Psoas muscle (tissue), 8 donors: ENCODE measurements at regions of chr19 and their contacts with region 1.

Region 1: DNA sequence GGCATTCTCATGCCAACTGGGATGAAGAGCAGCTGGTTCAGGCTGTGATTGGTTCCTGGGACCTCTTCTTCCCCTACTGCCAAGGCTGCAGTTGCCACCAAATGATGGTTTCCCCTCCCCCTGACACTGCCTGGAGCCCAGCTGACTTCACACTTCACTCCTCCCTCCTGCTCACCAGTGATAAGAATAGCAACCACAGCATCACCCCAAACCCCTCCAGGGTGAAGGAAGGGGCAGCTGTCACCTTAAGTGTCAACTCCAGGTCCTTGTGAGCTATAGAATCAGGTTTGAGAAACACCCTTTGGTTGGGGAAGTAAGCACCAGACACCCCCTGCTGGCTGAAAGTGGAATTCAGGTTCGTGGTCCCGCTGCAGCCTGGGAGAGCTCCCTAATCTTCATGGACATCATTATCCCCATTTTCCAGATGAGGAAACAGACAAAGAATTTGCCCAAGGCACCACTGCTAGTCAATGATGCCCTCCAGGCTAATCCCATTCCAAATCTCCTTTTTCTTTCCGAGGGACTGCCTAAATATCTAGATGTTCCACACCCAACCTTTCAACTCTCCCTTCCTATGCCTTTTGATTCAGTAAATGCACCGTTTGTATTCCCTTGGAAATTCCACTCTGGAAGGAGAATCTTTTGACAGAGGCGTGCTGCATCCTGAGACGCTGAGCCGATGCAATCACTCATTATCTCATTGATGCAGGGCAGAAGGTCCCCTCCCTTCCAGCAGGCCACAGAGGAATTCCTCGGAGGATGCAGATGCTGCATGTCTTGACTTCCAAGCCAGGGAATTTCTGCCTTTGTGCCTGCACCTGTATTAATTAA is 50.6 kb upstream of the UQCRFS1 start:
- DNase-seq: peak; percentile 51 to 66
- ATAC-seq: peak; percentile 56 to 82 (median 78)
- H3K4me3 ChIP-seq: no peak overlapping the region
- H3K27ac ChIP-seq: peak overlapping the region; percentile 28
- H3K4me1 ChIP-seq: peaks cover 10% of the 10 kb centered on the region
- H3K27me3 ChIP-seq: no peaks in the 10 kb centered on the region
- CTCF ChIP-seq: peak; percentile 75

Region 2: GRCh38 chr19:28737021-28737895 is 526.3 kb before region 1 on chr19:
- intact Hi-C with region 1: loop called (anchors 2 to 10 kb)
- DNase-seq: no peak
- ATAC-seq: peak in 1 of 4 donors; percentile 23
- H3K4me3 ChIP-seq: no peak overlapping the region
- H3K27ac ChIP-seq: no peak overlapping the region
- H3K4me1 ChIP-seq: no peaks in the 10 kb centered on the region
- H3K27me3 ChIP-seq: no peaks in the 10 kb centered on the region
- CTCF ChIP-seq: peak; percentile 63

Region 3: DNA sequence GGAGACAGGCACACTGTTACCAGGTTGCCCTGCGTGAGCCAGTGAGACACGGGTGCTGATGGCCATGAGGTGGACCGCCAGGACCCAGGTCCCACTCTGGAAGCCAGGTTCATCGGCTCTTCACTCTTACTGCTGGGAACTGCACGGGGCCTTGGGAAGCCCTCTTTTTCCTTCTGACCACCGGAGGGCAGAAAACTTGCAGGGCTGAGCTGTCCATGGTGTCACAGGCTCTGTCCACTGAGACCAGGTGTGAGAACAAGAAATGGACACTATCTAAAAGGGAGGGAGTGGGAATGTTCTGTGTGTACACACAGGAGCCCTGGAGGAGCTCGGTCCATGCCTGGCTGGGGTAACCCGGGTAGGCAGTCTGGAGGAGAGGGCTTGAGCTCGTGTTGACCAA is 143.9 kb before region 1 on chr19:
- intact Hi-C with region 1: loop called in 1 of 2 experiments (anchors 1 kb)
- DNase-seq: no peak
- ATAC-seq: peak in 2 of 4 donors; percentile 54 to 73
- H3K4me3 ChIP-seq: no peak overlapping the region
- H3K27ac ChIP-seq: no peak overlapping the region
- H3K4me1 ChIP-seq: no peaks in the 10 kb centered on the region
- H3K27me3 ChIP-seq: no peaks in the 10 kb centered on the region
- CTCF ChIP-seq: peak; percentile 34

Region 4: DNA sequence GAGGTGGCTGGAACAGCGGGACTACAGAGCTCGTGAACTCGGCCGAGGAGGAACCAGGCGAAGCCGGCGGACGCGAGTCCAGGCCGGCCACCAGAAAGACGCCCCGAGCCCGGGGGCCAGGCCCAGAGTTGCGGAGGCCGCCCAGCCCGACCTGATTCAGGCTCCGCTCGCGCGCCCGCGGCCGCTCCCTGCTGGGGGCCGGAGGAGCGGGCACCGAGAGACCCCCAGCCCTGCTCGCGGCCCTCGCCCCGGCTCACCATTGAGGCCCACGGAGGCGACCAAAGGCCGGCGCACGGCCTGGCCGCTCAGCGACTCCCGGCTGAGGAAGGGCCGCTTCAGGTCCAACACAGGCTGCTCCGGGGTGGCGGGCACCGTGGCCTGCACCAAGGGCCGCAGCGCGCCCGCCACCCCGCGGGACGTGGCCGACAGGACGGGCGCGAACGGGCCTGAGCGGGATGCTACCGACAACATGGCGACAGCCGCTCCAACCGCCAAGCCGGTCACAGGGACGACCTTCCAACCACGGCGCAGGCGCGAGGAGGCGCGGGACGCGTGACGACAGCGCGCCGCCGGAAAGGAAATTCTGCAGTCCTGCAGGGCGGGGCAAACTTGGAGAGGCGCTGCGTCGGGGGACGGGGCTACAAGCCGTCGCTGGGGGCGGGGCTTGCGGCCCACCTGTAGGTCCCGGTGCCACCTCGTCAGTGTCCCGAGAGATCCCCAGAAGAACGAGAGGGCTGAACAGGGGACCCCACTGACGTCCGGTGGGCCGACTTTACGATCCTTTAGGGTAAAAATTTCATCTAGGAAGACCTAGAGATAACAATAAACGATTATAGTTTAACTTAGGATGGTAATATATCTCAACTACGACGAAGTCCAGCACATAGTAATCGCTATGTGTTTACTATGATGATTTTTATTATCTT is 50.6 kb before region 1 on chr19 and contains the start of gene UQCRFS1:
- intact Hi-C with region 1: loop called in 1 of 2 experiments (anchors 5 kb)
- DNase-seq: peak; percentile 96 to 97
- ATAC-seq: peak; percentile 99
- H3K4me3 ChIP-seq: peak within 1 kb of the TSS; percentile 76
- H3K27ac ChIP-seq: peak within 1 kb of the TSS; percentile 91
- H3K4me1 ChIP-seq: peaks cover 24% of the 10 kb centered on the region
- H3K27me3 ChIP-seq: no peaks in the 10 kb centered on the region
- CTCF ChIP-seq: no peak
- total RNA-seq, gene UQCRFS1: 102 to 155 (median 109) TPM